H1 (cell line): ENCODE measurements at regions of chr6 and their contacts with region 1.

Region 1: GRCh38 chr6:19472847-19473246 is 364.3 kb upstream of the ID4 start:
- DNase-seq: peak in 1 of 2 experiments; percentile 85
- H3K4me3 ChIP-seq: no peak overlapping the region
- H3K27ac ChIP-seq: no peak overlapping the region
- H3K4me1 ChIP-seq: no peaks in the 10 kb centered on the region
- H3K27me3 ChIP-seq: no peaks in the 10 kb centered on the region
- CTCF ChIP-seq: peak; percentile 68 to 90 (median 88)
- EP300 ChIP-seq: no peak
- POLR2A ChIP-seq: no peak
- RAD21 ChIP-seq: peak; percentile 85 to 88

Region 2: DNA sequence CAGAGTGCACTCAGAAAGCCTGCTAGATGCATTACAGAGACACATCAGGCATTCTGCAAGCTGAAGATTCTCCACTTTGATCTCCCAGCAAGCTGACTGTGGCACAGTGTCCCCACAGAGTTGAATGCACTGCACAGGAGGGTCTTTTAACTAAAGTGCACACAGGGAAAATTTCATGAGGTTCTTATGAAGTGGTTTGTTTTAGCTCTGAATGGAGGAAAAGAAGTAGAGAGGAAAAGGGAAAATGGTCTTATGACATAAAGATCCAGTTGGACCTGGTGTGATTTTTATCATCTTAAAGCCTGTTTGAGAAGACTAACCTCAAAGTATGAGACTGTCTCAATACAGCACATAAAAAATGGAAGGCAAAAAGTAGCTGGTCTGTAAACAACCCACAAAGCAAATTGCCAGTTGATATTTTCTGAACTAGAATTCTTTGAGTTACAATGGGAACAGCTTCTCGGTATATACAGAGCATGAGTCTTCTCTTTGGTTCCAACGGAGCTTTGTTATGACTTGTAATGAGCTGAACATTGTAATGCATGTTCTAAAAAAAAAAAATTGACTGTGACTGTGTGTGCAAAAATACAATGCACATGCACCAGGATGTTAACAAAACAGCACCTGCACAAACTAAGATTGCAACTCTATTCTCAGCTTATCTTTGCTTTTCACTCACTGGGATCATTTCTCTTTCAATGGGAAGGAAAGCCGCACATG is 18.7 kb before region 1 on chr6:
- CTCF ChIA-PET with region 1: interaction called, 10 read pairs
- POLR2A ChIA-PET with region 1: no interaction called
- DNase-seq: no peak
- H3K4me3 ChIP-seq: no peak overlapping the region
- H3K27ac ChIP-seq: no peak overlapping the region
- H3K4me1 ChIP-seq: no peaks in the 10 kb centered on the region
- H3K27me3 ChIP-seq: no peaks in the 10 kb centered on the region
- CTCF ChIP-seq: no peak
- EP300 ChIP-seq: no peak
- POLR2A ChIP-seq: no peak
- RAD21 ChIP-seq: no peak